Activated T-helper 2 cell treated with anti-CD3 and anti-CD28 coated beads, Interferon-gamma antibody, Interleukin-2, Interleukin-4, amounts not matched to agents 10 μg/mL and 5 μg/mL and 100 μg/mL, durations not matched to agents 14 hours and 24 hours and 36 hours (primary cell): ENCODE measurements at regions of chr12 and their contacts with region 1.

Region 1: GRCh38 chr12:39272871-39273770 is 169.8 kb downstream of the KIF21A start:
- DNase-seq: no peak
- H3K4me3 Mint-ChIP-seq: no peak overlapping the region
- H3K27ac Mint-ChIP-seq: no peak overlapping the region
- H3K4me1 Mint-ChIP-seq: peaks cover 6% of the 10 kb centered on the region
- H3K27me3 Mint-ChIP-seq: peaks cover 17% of the 10 kb centered on the region

Region 2: DNA sequence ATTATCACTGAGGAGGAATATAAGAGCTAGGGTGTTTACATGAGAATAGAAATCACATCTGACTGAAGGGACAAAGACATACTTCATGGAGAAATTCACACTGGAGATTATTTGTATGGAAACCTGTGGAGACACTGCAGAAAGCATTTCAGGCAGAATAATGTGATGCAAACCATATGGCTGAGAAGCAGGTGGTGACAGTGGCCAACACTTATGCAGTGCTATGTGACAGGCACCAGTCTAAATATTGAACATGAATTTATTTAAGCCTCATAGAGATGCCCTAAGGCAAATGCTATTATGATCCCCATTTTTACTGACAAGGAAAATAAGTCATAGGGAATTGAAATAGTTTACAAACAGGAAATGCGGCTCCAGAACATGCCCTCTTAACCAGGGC is 940.3 kb before region 1 on chr12:
- intact Hi-C with region 1: loop called (anchors 2 kb)
- DNase-seq: no peak
- H3K4me3 Mint-ChIP-seq: no peak overlapping the region
- H3K27ac Mint-ChIP-seq: no peak overlapping the region
- H3K4me1 Mint-ChIP-seq: no peaks in the 10 kb centered on the region
- H3K27me3 Mint-ChIP-seq: no peaks in the 10 kb centered on the region

Region 3: GRCh38 chr12:38921025-38921677 is 352.0 kb before region 1 on chr12:
- intact Hi-C with region 1: loop called (anchors 5 kb)
- DNase-seq: no peak
- H3K4me3 Mint-ChIP-seq: no peak overlapping the region
- H3K27ac Mint-ChIP-seq: no peak overlapping the region
- H3K4me1 Mint-ChIP-seq: no peaks in the 10 kb centered on the region
- H3K27me3 Mint-ChIP-seq: no peaks in the 10 kb centered on the region

Region 4: DNA sequence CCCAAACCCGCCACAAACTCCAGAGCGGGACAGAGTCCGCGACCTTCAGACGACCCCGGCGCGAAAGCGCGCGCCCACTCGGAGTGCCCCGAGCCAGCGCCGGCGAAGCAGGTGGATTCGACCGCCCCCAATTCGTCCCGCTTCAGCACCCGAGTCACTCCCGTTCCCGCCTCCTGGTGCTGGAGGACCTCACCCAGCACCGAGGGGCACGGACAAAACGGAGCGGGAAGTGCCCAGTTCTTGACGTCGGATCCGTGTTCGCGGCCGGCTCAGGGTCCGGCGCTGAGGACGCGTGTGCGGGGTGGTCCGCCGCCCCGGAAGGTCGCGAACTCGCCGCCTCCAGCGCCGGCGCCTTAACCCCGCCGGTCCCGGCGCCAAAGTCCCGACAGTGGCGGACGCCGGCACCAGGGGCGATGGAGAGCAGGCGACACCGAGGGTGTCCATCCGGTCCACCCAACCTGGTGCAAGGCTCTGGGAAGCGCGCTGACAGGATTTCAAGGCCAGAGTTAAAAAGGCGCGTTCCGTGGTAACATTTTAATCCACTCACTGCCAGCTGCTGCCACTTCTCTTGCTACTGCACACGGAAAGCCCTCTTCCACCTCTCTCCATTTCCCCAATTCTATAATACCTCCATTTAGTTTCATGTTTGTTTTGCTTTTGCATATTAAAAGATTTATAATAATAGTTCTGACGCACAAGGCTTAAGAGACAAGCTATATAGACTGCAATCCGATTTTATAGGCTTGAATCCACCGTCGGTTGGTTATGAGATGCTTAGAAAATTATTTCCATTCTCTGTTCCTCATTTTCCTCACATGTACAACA is 127.7 kb before region 1 on chr12:
- intact Hi-C with region 1: loop called (anchors 2 kb)
- DNase-seq: peak; percentile 39
- H3K4me3 Mint-ChIP-seq: peak overlapping the region; percentile 40
- H3K27ac Mint-ChIP-seq: no peak overlapping the region
- H3K4me1 Mint-ChIP-seq: peaks cover 1% of the 10 kb centered on the region
- H3K27me3 Mint-ChIP-seq: peaks cover 15% of the 10 kb centered on the region

Region 5: GRCh38 chr12:39252628-39253027 is 20.5 kb before region 1 on chr12:
- intact Hi-C with region 1: no loop called
- DNase-seq: no peak
- H3K4me3 Mint-ChIP-seq: no peak overlapping the region
- H3K27ac Mint-ChIP-seq: no peak overlapping the region
- H3K4me1 Mint-ChIP-seq: no peaks in the 10 kb centered on the region
- H3K27me3 Mint-ChIP-seq: no peaks in the 10 kb centered on the region